Activated T-helper 1 cell treated with anti-CD3 and anti-CD28 coated beads, Interleukin-12 subunit alpha, Interleukin-12 subunit beta, Interleukin-2, Interleukin-4 antibody, amounts not matched to agents 30 ng/mL and 10 ng/mL and 1 ng/mL, durations not matched to agents 14 hours and 24 hours and 36 hours (primary cell): ENCODE measurements at regions of chr13 and their contacts with region 1.

Region 1: DNA sequence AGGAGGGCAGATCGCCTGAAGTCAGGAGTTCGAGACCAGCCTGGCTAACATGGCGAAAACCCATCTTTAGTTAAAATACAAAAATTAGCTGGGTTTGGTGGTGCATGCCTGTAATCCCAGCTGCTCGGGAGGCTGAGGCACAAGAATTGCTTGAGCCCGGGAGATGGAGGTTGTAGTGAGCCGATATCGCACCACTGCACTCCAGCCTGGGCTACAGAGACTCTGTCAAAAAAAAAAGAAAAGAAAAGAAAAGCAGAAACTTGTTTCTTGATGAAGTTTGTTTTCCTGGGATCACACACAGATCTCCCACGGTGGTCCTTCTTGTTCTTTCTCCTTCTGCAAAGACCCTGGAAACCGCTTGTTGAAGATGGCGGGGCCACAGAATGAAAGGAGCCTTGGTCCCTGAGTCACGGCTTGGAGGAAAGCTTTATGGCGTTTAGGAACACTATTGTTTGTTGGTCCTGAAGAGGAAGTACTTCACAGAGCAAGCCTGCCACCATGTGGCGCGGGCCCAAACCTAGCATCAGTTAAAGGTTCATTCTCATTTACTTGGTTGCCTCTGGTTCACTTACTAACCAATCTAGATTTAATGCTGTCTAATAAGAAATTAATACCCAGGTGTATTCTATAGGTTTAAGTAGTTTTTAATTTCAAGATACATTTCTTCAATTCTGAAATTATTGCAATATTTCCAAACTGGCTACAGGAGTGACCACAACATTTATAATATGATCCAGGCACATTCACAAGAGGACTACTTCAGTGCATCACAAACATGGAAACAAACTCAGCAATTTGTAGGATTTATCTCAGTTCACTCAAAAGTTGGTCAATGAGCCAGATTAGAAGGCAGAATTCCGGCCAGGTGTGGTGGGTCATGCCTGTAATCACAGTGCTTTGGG is 21.3 kb upstream of the ARL11 start:
- DNase-seq: peak; percentile 69
- H3K4me3 Mint-ChIP-seq: peak overlapping the region; percentile 80
- H3K27ac Mint-ChIP-seq: peak overlapping the region; percentile 76
- H3K4me1 Mint-ChIP-seq: peaks cover 13% of the 10 kb centered on the region
- H3K27me3 Mint-ChIP-seq: no peaks in the 10 kb centered on the region

Region 2: GRCh38 chr13:49098771-49099512 is 508.1 kb before region 1 on chr13:
- intact Hi-C with region 1: loop called (anchors 5 kb)
- DNase-seq: no peak
- H3K4me3 Mint-ChIP-seq: no peak overlapping the region
- H3K27ac Mint-ChIP-seq: no peak overlapping the region
- H3K4me1 Mint-ChIP-seq: peaks cover 18% of the 10 kb centered on the region
- H3K27me3 Mint-ChIP-seq: no peaks in the 10 kb centered on the region

Region 3: GRCh38 chr13:49240017-49240416 is 367.0 kb before region 1 on chr13:
- intact Hi-C with region 1: loop called (anchors 1 kb)
- DNase-seq: no peak
- H3K4me3 Mint-ChIP-seq: no peak overlapping the region
- H3K27ac Mint-ChIP-seq: no peak overlapping the region
- H3K4me1 Mint-ChIP-seq: no peaks in the 10 kb centered on the region
- H3K27me3 Mint-ChIP-seq: peaks cover 12% of the 10 kb centered on the region

Region 4: DNA sequence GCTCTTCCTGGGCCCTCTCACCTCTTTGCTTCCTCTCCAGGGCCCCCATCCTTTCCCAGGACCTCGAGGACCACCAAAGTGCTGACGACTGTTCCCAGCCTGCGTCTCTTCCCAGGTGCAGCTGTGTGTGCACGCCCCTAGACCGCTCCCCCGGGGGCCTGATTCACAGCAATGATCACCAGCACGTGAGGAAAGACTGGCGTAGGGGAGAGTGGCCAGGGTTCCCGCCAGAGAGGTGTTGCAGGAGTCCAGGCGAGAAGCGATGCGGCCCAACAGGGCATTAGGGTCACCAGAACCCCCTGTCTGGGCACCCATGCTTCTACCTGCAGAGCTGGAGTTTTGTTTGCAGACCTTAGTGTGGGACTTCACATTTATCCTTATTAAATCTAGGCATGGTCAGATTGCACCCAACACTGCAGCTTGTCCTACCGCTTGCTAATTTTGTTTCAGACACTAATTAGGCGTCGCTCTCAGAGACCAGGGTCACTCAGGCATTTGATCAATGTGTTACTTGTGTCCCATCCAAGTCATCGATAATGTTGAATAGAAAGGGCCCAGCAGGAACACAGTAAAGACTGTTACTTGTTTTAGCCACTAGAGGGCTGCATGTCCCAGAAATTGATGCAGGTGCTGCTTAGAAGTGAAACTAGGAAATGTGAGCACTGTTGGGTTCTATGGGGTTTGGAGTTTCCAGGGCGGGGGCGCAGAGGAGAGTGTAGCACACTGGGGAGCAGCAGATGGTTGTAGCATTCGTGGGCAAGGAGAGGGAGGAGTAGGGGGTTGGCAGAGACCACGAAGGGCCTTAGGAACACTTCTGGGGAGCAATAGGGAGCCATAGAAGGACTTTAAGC is 306.0 kb before region 1 on chr13:
- intact Hi-C with region 1: loop called (anchors 1 kb)
- DNase-seq: peak; percentile 61
- H3K4me3 Mint-ChIP-seq: peak overlapping the region; percentile 10
- H3K27ac Mint-ChIP-seq: peak overlapping the region; percentile 65
- H3K4me1 Mint-ChIP-seq: peaks cover 14% of the 10 kb centered on the region
- H3K27me3 Mint-ChIP-seq: no peaks in the 10 kb centered on the region

Region 5: GRCh38 chr13:49421391-49421790 is 185.6 kb before region 1 on chr13:
- intact Hi-C with region 1: loop called (anchors 1 kb)
- DNase-seq: no peak
- H3K4me3 Mint-ChIP-seq: no peak overlapping the region
- H3K27ac Mint-ChIP-seq: no peak overlapping the region
- H3K4me1 Mint-ChIP-seq: no peaks in the 10 kb centered on the region
- H3K27me3 Mint-ChIP-seq: peaks cover 3% of the 10 kb centered on the region

Region 6: DNA sequence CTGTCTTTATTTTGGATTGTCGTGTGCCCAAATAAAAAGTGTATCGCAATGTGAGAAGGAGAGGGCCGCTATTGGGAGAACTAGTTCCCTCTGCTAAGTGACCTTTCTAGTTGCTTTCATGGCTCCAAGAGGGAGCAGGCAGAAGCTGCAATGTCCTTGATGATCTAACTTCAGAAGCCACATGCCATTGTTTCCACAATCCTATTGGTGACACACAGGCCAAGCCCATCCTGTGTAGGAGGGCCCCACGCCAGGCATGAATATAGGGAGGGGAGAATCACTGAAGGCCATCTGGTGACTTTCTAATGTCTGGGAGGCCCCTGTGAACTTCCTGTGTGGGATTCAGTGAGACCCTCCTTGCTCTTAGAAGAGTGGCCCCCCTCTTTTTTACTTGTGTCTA is 233.3 kb after region 1 on chr13:
- intact Hi-C with region 1: loop called (anchors 5 kb)
- DNase-seq: no peak
- H3K4me3 Mint-ChIP-seq: no peak overlapping the region
- H3K27ac Mint-ChIP-seq: no peak overlapping the region
- H3K4me1 Mint-ChIP-seq: no peaks in the 10 kb centered on the region
- H3K27me3 Mint-ChIP-seq: no peaks in the 10 kb centered on the region